Activated naive CD8-positive, alpha-beta T cell treated with anti-CD3 and anti-CD28 coated beads, Interleukin-2, amount 10 ng/mL, durations not matched to agents 7 days and 5 days (primary cell): ENCODE measurements at regions of chr9 and their contacts with region 1.

Region 1: GRCh38 chr9:36148311-36149051 is 11.9 kb downstream of the GLIPR2 start:
- DNase-seq: peak; percentile 71
- ATAC-seq: peak; percentile 31
- H3K4me3 Mint-ChIP-seq: peak overlapping the region; percentile 8
- H3K27ac Mint-ChIP-seq: peak overlapping the region; percentile 62
- H3K4me1 Mint-ChIP-seq: peaks cover 81% of the 10 kb centered on the region
- H3K27me3 Mint-ChIP-seq: no peaks in the 10 kb centered on the region

Region 2: DNA sequence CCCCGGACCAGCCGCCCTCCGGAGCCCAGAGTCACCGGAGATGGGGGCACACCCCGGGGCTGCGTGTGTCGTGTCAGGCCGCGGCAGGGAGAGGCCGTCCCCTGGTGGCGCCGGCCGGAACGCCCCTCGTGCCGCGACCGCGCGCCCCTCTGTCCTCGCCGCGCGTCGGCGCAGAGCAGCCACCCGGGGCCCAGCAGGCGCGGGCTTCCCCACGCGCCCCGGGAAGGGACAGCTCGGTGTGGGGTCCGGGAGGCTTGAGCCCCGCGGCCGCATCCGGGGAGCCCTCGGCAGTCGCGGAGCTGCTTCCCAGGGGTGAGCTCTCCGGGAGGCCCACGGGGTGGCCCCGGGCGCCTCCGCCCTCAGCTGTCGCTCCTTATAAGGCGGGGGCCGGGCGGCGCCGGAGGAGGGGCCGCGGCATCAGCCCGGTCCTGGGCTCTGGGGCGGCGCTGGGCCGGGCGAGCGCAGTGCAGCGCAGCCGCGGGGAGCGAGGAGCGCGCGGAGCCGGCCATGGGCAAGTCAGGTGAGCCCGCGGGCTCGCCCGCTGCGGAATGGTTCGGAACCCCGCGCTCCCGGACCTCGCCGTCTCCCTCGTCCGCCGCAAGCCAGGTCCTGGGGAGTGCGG is 12.1 kb before region 1 on chr9 and contains the start of gene GLIPR2:
- POLR2A ChIA-PET with region 1: interaction called, 24 read pairs
- DNase-seq: peak; percentile 88
- ATAC-seq: peak; percentile 97
- H3K4me3 Mint-ChIP-seq: peak within 1 kb of the TSS; percentile 96
- H3K27ac Mint-ChIP-seq: peak within 1 kb of the TSS; percentile 72
- H3K4me1 Mint-ChIP-seq: peaks cover 48% of the 10 kb centered on the region
- H3K27me3 Mint-ChIP-seq: peaks cover 29% of the 10 kb centered on the region
- total RNA-seq, gene GLIPR2: 56.5 to 58.1 TPM

Region 3: GRCh38 chr9:36166101-36166927 is 17.8 kb after region 1 on chr9:
- POLR2A ChIA-PET with region 1: interaction called, 11 read pairs
- DNase-seq: peak; percentile 95
- ATAC-seq: peak; percentile 94
- H3K4me3 Mint-ChIP-seq: peak overlapping the region; percentile 76
- H3K27ac Mint-ChIP-seq: peak overlapping the region; percentile 68
- H3K4me1 Mint-ChIP-seq: peaks cover 4% of the 10 kb centered on the region
- H3K27me3 Mint-ChIP-seq: peaks cover 27% of the 10 kb centered on the region